Mammary epithelial cell (primary cell): ENCODE measurements at regions of chr12 and their contacts with region 1.

Region 1: DNA sequence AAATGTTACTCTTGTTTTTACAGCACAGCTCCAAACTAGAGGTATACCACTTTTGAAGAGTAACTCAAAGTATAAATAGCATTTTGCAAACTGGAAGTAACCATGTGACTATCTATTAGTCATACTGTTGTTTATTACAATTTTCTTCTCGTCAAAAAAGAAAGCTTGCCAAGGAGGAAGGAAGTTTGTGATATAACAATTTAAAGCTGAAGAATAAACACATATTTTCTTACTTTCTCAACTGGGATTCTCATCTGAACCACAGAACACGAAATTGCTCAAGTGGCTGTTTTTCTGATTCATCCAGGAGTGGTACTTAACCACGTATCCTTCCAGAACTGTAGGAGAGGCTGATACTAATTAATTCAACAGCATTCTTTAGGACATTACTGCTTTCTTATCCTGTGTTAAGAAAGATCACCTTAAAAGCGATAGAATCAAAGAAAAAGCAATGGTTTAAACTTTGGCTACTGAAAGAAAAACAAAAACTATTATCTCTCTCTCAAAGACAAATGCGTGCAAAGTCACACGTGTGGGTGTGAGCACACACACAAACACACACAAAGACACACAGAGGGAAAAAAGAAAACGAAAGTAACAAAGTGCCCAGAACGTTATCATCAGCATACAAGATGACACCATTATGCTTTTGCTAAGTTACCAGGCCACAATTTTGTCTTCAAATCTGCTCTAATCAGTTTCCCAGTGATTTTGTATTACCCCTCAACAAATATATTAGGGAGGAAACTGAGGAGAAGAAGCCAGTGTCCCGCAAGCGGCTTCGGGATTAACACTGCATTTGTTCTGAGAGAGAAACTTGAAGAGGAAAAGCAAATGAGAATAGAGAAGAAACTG is at the start of gene CLEC2B:
- DNase-seq: peak; percentile 92
- H3K4me3 ChIP-seq: peak within 1 kb of the TSS; percentile 45 to 56 (median 53)
- H3K27ac ChIP-seq: peak within 1 kb of the TSS; percentile 70
- H3K4me1 ChIP-seq: peaks cover 26% of the 10 kb centered on the region
- H3K27me3 ChIP-seq: no peaks in the 10 kb centered on the region
- CTCF ChIP-seq: no peak
- total RNA-seq, gene CLEC2B: 0.17 to 0.42 TPM

Region 2: DNA sequence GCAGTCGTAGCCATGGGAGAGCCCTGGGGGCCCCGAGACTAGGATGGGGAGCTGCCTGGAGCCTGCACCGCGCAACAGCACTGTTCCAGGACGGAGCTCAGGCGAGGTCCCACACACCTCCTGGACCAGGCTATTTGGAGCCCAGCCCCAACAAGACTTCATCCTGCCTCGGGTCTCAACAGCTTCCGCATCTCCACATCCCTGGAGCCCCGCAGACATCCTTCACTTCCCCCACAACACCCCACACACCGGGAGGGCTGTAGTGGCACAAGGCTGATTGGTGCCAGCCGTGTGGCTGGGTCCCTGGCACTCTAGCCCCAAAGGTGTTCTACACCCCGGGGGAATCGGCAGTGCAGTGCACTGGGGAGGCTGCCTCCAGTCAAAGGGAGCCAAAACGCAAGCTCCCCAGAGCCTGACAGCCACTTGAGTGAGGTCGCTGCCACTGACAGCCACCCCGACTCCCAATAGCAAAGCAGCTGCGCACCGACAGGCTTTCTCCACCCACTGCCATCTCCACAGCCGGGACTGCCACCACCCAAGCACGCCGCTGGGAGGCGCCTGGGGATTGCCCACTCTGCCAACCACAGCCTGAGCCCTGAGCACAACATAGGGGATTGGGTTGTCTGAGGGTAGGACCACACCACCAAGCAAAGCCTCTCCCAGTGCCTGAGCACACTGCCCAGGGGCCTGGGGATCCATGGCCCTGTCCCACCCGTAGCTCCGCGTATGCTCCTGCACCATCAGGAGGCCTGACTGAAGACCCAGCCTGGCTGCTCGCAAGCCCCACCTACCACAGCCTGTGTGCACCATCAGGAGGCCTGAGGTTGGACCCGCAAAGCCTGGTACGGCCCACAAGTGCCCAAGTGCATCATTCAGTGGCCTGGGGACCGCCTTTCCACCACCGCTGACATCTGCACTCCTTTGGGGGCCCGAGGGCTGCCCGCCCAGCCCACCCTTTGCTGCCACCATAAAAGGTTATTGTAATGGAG is 55.4 kb before region 1 on chr12:
- CTCF ChIA-PET with region 1: no interaction called
- dilution Hi-C with region 1: no loop called
- in situ Hi-C with region 1: no loop called
- intact Hi-C with region 1: loop called (anchors 2 kb)
- DNase-seq: peak; percentile 55
- H3K4me3 ChIP-seq: peak overlapping the region; percentile 20 to 42 (median 39)
- H3K27ac ChIP-seq: no peak overlapping the region
- H3K4me1 ChIP-seq: peaks cover 5% of the 10 kb centered on the region
- H3K27me3 ChIP-seq: no peaks in the 10 kb centered on the region
- CTCF ChIP-seq: peak; percentile 92 to 99

Region 3: GRCh38 chr12:9895215-9895971 is 25.9 kb after region 1 on chr12:
- CTCF ChIA-PET with region 1: no interaction called
- dilution Hi-C with region 1: no loop called
- in situ Hi-C with region 1: no loop called
- intact Hi-C with region 1: loop called (anchors 1 kb)
- DNase-seq: no peak
- H3K4me3 ChIP-seq: no peak overlapping the region
- H3K27ac ChIP-seq: no peak overlapping the region
- H3K4me1 ChIP-seq: peaks cover 8% of the 10 kb centered on the region
- H3K27me3 ChIP-seq: no peaks in the 10 kb centered on the region
- CTCF ChIP-seq: no peak